ENCODE measurements at regions of chr4 and their contacts with region 1.

Region 1: GRCh38 chr4:139734875-139735380 is 69.3 kb downstream of the MGST2 start:
- DNase-seq: peak; percentile 51
- ATAC-seq: peak; percentile 89
- H3K4me3 ChIP-seq: peak overlapping the region; percentile 60
- H3K27ac ChIP-seq: no peak overlapping the region
- H3K4me1 ChIP-seq: peaks cover 4% of the 10 kb centered on the region; the same call in 1 of the 2 replicates
- H3K27me3 ChIP-seq: no peaks in the 10 kb centered on the region
- CTCF ChIP-seq: peak; percentile 68

Region 2: GRCh38 chr4:139749338-139749737 is 14.4 kb after region 1 on chr4:
- CTCF ChIA-PET with region 1: no interaction called
- POLR2A ChIA-PET with region 1: interaction called, 17 read pairs
- intact Hi-C with region 1: no loop called
- DNase-seq: no peak
- ATAC-seq: no peak
- H3K4me3 ChIP-seq: no peak overlapping the region
- H3K27ac ChIP-seq: no peak overlapping the region
- H3K4me1 ChIP-seq: peaks cover 6% of the 10 kb centered on the region
- H3K27me3 ChIP-seq: no peaks in the 10 kb centered on the region
- CTCF ChIP-seq: no peak

Region 3: GRCh38 chr4:139901531-139902320 is 166.8 kb after region 1 on chr4:
- CTCF ChIA-PET with region 1: no interaction called
- POLR2A ChIA-PET with region 1: no interaction called
- intact Hi-C with region 1: loop called (anchors 10 kb)
- DNase-seq: peak; percentile 33
- ATAC-seq: peak; percentile 72
- H3K4me3 ChIP-seq: peak overlapping the region; percentile 79
- H3K27ac ChIP-seq: no peak overlapping the region
- H3K4me1 ChIP-seq: peaks cover 18% of the 10 kb centered on the region
- H3K27me3 ChIP-seq: no peaks in the 10 kb centered on the region
- CTCF ChIP-seq: no peak

Region 4: DNA sequence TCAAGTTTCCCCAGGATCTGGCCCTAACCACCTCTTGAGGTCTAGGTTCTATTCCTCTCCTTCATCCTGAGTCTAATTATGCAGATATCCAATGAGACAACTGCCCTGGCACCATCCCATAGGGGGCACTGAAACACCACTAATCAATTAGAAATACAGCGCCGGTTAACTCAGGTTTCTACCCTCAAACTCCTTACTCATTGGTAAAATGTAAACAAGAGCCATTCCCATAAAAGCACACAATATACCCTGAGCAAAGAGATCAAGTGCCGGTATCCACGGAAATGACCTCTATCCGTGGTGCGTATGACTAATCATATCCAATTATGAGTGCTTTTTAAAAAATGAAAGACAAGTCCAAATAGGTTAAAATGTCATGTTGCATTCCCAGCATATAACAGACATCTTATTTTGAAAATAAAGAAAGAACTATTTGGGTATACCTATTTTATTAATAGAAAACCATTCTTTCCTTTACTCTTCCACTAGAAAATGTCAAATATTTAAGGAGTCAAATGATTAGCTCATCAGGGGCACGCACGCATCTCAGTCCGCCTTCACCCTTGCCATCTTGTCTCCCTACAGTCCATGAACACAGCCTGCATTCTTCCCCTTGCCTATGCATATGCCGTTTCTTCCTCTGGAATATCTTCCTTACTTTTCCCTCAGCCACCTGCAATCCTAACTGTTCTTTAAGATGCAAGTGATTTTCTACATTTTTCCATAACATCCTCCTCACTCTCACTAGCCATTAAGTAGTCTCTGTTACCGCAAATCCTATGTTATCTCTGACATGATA is 278.0 kb after region 1 on chr4:
- CTCF ChIA-PET with region 1: interaction called, 3 read pairs
- POLR2A ChIA-PET with region 1: no interaction called
- intact Hi-C with region 1: loop called (anchors 5 kb)
- DNase-seq: peak; percentile 93
- ATAC-seq: peak; percentile 99
- H3K4me3 ChIP-seq: 0 out of 2 replicates have a peak overlapping the region, but pooled peaks have one; percentile 13
- H3K27ac ChIP-seq: peak overlapping the region; percentile 82
- H3K4me1 ChIP-seq: peaks cover 22% of the 10 kb centered on the region
- H3K27me3 ChIP-seq: no peaks in the 10 kb centered on the region
- CTCF ChIP-seq: peak; percentile 83

Region 5: DNA sequence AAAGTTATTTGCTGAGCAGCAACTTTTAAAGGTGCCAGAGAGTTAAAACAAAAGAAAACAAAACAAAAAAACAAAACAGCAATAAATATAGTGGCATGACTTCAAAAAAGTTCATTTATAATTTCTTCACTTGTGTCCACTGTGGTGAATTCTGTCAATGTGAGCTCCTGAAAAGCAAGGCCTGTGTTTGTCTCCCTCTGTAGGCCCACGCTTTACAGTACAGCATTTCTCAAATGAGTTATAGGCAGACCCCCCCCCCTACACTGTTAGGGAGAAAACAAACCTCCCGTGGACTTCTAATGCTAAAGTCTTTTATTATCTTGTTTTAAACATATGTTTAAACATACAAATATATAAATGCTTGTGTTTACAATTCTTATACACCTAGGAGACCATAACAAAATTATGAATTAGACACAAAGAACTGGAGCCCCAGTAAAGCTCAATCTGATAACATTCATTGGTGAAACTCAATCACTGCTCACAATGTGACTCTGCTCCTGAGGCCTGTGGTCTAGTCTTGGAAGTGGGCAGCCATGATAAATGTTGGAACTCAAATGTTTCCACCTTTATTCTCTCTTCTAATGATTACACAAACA is 591.6 kb after region 1 on chr4:
- CTCF ChIA-PET with region 1: no interaction called
- POLR2A ChIA-PET with region 1: no interaction called
- intact Hi-C with region 1: loop called (anchors 10 kb)
- DNase-seq: peak; percentile 59
- ATAC-seq: peak; percentile 86
- H3K4me3 ChIP-seq: no peak overlapping the region
- H3K27ac ChIP-seq: no peak overlapping the region
- H3K4me1 ChIP-seq: no peaks in the 10 kb centered on the region
- H3K27me3 ChIP-seq: no peaks in the 10 kb centered on the region
- CTCF ChIP-seq: peak; percentile 82

Region 6: GRCh38 chr4:140427106-140427961 is 692.4 kb after region 1 on chr4 and contains the start of gene CLGN:
- CTCF ChIA-PET with region 1: no interaction called
- POLR2A ChIA-PET with region 1: no interaction called
- intact Hi-C with region 1: loop called (anchors 10 kb)
- DNase-seq: peak; percentile 66
- ATAC-seq: peak; percentile 76
- H3K4me3 ChIP-seq: peak within 1 kb of the TSS; percentile 93
- H3K27ac ChIP-seq: peak within 1 kb of the TSS; percentile 25; the same call in 1 of the 2 replicates
- H3K4me1 ChIP-seq: peaks cover 40% of the 10 kb centered on the region
- H3K27me3 ChIP-seq: no peaks in the 10 kb centered on the region
- CTCF ChIP-seq: peak; percentile 48; the same call in 1 of the 2 replicates
- total RNA-seq, gene CLGN: 7.9 and 9.6 TPM in 2 replicates